ENCODE measurements at regions of chr1 and their contacts with region 1.

Region 1: GRCh38 chr1:31938174-31938950 is at the start of gene PTP4A2:
- DNase-seq: peak; percentile 90
- ATAC-seq: peak; percentile 73
- H3K4me3 Mint-ChIP-seq: peak within 1 kb of the TSS; percentile 86
- H3K27ac Mint-ChIP-seq: peak within 1 kb of the TSS; percentile 99
- H3K4me1 Mint-ChIP-seq: peaks cover 70% of the 10 kb centered on the region
- H3K27me3 Mint-ChIP-seq: no peaks in the 10 kb centered on the region
- total RNA-seq, gene PTP4A2: 409 to 419 TPM

Region 2: DNA sequence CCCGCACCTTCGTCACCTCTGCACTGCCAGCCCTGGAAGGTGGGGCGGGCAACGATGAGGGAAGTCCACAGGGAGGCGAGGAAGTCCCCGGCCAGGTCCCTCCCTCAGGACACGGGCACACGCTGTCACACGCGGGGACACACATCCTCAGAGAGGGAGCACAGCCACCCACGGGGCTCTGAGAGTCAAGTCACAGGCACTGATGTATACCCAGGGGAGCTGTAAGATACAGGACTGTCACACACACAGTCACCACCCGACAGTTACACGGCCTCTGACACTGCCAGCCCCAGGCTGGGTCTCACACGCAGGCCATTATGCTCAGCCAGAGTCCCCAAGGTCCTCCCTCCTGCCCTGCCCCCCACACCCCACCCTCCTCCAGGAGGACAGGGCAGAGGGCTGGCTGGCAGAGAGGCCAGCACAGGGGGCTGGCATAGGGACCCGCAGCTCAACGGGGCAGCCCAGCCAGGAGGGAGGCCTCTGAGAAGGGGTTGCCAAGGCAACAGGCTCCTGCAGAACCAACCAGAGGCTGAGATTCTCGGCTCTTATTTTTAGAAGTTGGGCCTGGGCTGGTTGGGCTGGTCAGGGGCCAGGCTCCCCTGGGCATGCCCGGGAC is 156.5 kb before region 1 on chr1:
- CTCF ChIA-PET with region 1: no interaction called
- POLR2A ChIA-PET with region 1: no interaction called
- DNase-seq: no peak
- ATAC-seq: no peak
- H3K4me3 Mint-ChIP-seq: no peak overlapping the region
- H3K27ac Mint-ChIP-seq: no peak overlapping the region
- H3K4me1 Mint-ChIP-seq: no peaks in the 10 kb centered on the region
- H3K27me3 Mint-ChIP-seq: peaks cover 7% of the 10 kb centered on the region

Region 3: GRCh38 chr1:31910933-31911332 is 27.4 kb before region 1 on chr1:
- CTCF ChIA-PET with region 1: interaction called, 21 read pairs
- POLR2A ChIA-PET with region 1: interaction called, 9 read pairs
- DNase-seq: no peak
- ATAC-seq: no peak
- H3K4me3 Mint-ChIP-seq: no peak overlapping the region
- H3K27ac Mint-ChIP-seq: peak overlapping the region; percentile 33
- H3K4me1 Mint-ChIP-seq: peaks cover 48% of the 10 kb centered on the region
- H3K27me3 Mint-ChIP-seq: no peaks in the 10 kb centered on the region

Region 4: GRCh38 chr1:31955917-31956736 is 17.8 kb after region 1 on chr1:
- CTCF ChIA-PET with region 1: interaction called, 664 read pairs
- POLR2A ChIA-PET with region 1: interaction called, 157 read pairs
- DNase-seq: peak; percentile 81
- ATAC-seq: peak; percentile 81
- H3K4me3 Mint-ChIP-seq: peak overlapping the region; percentile 48
- H3K27ac Mint-ChIP-seq: peak overlapping the region; percentile 88
- H3K4me1 Mint-ChIP-seq: peaks cover 83% of the 10 kb centered on the region
- H3K27me3 Mint-ChIP-seq: no peaks in the 10 kb centered on the region

Region 5: DNA sequence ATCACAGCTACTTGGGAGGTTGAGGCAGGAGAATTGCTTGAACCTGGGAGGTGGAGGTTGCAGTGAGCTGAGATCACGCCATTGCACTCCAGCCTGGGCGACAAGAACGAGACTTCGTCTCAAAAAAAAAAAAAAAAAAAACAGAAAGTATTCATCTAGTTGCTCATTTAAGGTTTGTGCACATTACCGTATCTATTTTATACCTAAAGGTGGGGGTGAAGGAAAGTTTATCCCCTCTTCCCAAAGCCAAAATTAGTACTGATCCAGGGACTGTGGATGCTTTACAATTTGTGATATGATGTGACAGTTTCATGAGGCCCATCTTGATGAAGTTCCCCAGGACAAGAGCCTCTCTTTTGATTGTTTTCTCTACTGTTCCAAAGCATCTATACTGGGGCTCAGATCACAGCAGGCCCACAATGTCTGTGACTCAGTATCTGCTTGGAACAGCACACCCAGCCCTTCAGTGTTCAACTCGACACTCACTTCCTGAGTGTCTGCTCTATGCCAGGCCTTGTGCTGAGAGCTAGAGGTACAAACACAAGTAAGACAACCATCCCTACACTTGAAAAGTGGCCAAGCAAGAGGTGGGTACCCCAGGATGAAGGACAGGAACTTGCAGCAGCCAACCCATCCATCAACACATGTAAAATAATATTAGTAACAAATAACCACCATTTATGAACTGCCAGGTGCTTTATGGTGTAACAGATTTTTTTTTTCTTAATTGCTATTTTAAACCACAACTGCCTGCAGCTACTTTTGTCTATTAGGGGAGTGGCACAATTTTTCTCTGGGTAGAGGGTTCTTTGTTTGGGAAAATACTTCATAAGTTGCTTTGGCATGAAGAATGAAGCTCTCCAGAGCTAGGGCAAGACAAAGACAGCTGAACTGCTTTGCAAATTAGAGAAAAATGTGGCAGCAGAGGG is 46.3 kb after region 1 on chr1:
- CTCF ChIA-PET with region 1: interaction called, 10 read pairs
- POLR2A ChIA-PET with region 1: interaction called, 4 read pairs
- DNase-seq: peak; percentile 50
- ATAC-seq: peak; percentile 70
- H3K4me3 Mint-ChIP-seq: peak overlapping the region; percentile 4
- H3K27ac Mint-ChIP-seq: peak overlapping the region; percentile 95
- H3K4me1 Mint-ChIP-seq: peaks cover 67% of the 10 kb centered on the region
- H3K27me3 Mint-ChIP-seq: no peaks in the 10 kb centered on the region

Region 6: DNA sequence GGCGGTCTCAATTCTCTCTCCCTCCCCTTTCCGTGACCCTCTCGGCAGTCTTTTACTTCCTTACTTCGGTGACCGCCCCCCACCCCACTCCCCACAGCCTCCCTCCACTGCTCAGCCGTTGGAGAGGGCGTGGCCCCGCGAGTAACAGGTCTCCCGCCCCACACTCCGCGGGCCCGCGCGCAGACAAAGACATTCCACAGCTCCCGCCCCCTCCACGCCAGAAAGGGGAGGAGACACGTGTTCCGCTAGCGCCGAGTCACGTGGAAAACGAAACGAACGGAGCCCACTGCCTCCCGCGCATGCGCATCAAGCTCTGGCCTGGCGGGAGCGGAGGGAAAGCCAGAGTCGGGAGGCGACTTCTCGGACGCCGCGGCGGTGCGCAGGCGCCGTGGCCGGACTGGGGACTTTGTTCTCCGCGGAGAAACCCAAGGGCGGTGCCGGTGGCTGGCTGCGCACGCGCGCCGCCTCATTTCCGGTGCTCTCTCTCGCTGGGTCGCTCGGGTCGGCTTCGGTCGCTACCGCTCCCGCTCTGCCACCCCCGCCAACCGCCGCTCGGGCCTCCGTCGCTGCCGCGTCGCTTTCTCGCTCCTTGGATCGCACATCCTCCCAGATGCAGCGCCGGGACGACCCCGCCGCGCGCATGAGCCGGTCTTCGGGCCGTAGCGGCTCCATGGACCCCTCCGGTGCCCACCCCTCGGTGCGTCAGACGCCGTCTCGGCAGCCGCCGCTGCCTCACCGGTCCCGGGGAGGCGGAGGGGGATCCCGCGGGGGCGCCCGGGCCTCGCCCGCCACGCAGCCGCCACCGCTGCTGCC is 75.2 kb after region 1 on chr1 and contains the start of gene KHDRBS1:
- CTCF ChIA-PET with region 1: interaction called, 7 read pairs
- POLR2A ChIA-PET with region 1: interaction called, 18 read pairs
- DNase-seq: peak; percentile 99
- ATAC-seq: peak; percentile 87
- H3K4me3 Mint-ChIP-seq: peak within 1 kb of the TSS; percentile 96
- H3K27ac Mint-ChIP-seq: peak within 1 kb of the TSS; percentile 95
- H3K4me1 Mint-ChIP-seq: peaks cover 36% of the 10 kb centered on the region
- H3K27me3 Mint-ChIP-seq: no peaks in the 10 kb centered on the region
- total RNA-seq, gene KHDRBS1: 194 to 197 TPM